Common myeloid progenitor, CD34-positive (primary cell): ENCODE measurements at regions of chr2 and their contacts with region 1.

Region 1: GRCh38 chr2:11583840-11584524 is 50.1 kb downstream of the GREB1 start:
- DNase-seq: peak; percentile 87 to 95 (median 94)
- H3K4me3 ChIP-seq: no peak overlapping the region
- H3K27ac ChIP-seq: no peak overlapping the region
- H3K4me1 ChIP-seq: no peaks in the 10 kb centered on the region
- H3K27me3 ChIP-seq: peaks cover 0 to 9% (median 3%) of the 10 kb centered on the region in 5 experiments

Region 2: DNA sequence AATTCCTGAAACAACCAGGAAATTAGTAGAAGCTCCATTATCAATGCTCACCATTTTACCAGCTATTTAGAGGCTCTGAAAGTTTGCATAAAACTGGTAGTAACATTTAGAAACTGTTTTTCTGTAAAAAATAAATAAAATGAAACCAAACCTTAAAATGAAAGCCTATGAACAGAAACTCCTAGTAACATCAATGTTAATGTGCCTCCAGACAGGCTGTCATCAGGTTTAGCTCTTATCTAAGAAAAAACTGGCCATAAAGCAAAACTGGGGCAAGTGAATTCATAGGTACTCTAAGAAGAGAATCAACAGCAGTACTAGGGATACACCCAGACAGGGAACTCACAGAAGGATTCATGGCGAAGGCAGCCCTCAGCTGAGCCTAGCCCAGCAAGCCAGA is 126.0 kb before region 1 on chr2:
- CTCF ChIA-PET with region 1: interaction called, 19 read pairs
- POLR2A ChIA-PET with region 1: no interaction called
- DNase-seq: no peak
- H3K4me3 ChIP-seq: no peak overlapping the region
- H3K27ac ChIP-seq: no peak overlapping the region
- H3K4me1 ChIP-seq: peaks cover 0 to 15% (median 5%) of the 10 kb centered on the region in 4 experiments
- H3K27me3 ChIP-seq: no peaks in the 10 kb centered on the region

Region 3: DNA sequence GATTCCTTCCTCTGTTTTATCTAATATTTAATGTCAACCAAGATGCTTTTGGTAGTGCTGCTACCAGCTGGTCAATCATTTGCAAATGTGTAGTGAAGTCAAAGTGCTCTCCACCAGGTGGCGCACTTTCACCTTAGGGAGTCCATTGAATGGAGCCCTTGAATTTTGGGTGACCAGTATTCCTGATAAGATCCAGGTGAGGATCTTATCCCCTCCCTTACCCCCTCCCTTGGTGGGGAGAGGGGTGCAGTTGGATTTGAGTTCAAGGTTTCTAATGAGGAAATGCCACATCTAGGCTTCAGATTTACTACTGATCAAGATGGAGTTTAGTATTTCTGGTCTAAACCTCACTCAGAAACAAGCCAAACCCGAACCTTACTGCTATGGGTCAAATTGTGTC is 106.0 kb before region 1 on chr2:
- CTCF ChIA-PET with region 1: interaction called, 125 read pairs
- POLR2A ChIA-PET with region 1: no interaction called
- DNase-seq: peak; percentile 79 to 88 (median 82)
- H3K4me3 ChIP-seq: no peak overlapping the region
- H3K27ac ChIP-seq: no peak overlapping the region
- H3K4me1 ChIP-seq: peaks cover 0 to 12% (median 11%) of the 10 kb centered on the region in 4 experiments
- H3K27me3 ChIP-seq: peaks cover 8 to 44% (median 16%) of the 10 kb centered on the region in 5 experiments

Region 4: DNA sequence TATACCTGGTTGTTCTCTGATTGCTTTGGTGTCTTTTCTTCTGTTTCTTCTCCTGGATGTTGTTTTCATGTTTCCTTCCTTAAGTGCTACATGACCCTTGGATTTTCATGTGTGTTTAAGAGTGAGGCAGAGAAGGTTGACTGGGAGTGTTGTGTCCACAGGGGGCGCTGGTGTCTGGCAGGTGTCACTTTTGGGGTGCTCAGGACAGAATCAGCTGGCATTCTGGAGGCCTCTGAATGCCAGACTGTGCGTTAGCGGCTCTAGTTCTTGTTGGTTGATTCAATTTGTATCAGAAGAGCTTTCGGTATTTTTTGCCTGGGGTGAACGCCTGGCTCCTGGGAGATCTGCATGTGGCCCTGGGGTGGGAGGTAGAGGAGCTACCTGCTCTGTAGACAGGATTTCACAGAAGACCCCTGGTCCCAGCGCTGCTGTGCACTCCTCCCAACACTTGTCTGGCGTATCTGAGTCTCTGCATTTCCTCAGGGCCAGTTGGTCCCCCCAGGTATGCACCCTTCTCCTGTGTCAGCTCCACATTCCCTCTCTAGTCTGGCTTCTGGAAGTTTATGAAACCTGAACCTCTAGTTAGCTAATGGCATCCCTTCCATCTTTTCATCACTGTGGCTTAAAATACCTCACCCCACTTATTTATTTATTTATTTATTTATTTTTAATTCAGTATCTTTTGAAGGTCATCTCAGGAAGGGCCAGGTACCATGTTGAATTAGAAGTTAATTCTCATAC is 49.1 kb before region 1 on chr2:
- CTCF ChIA-PET with region 1: interaction called, 10 read pairs
- POLR2A ChIA-PET with region 1: no interaction called
- DNase-seq: no peak
- H3K4me3 ChIP-seq: no peak overlapping the region
- H3K27ac ChIP-seq: no peak overlapping the region
- H3K4me1 ChIP-seq: no peaks in the 10 kb centered on the region
- H3K27me3 ChIP-seq: peaks cover 0 to 66% (median 10%) of the 10 kb centered on the region in 5 experiments

Region 5: DNA sequence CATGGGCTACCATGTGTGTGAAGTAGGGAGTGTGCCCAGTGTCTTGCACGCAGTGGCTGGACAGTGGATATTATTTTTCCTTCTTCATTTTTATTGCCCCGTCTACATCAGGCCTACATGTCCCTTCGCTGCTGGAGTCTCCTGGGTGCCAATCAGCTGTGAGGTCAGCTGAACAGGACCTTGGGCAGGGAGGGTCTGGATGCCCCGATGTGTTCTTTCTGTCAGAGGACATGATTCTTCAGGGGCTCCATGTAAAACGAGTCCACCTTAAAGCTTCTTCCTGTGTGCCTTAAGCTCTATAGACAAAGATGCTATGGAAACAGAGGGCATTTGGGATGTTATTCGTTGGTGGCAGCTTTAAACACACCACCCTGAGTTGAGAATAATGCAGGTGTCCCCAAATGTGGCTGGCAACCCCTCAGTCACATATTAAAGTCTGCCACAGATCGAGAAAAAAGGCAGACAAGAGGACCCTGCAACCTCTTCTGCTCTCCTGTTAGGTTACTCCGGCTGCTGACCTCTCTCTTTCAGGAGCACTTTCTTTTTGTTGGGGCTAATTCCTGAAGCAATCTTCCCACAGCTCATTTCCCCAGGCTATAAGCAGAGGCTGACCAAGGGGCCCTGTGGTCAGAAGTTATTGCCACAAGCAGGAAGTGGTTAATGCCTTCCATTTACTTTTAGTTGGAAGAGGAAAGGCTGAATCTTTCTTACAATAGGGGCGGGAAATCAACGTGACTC is 30.2 kb before region 1 on chr2:
- CTCF ChIA-PET with region 1: interaction called, 12 read pairs
- POLR2A ChIA-PET with region 1: no interaction called
- DNase-seq: no peak
- H3K4me3 ChIP-seq: peak overlapping the region in 3 of 7 experiments; percentile 23 to 43 (median 35)
- H3K27ac ChIP-seq: no peak overlapping the region
- H3K4me1 ChIP-seq: peaks cover 0 to 12% (median 10%) of the 10 kb centered on the region in 4 experiments
- H3K27me3 ChIP-seq: peaks cover 0 to 26% (median 14%) of the 10 kb centered on the region in 5 experiments

Region 6: DNA sequence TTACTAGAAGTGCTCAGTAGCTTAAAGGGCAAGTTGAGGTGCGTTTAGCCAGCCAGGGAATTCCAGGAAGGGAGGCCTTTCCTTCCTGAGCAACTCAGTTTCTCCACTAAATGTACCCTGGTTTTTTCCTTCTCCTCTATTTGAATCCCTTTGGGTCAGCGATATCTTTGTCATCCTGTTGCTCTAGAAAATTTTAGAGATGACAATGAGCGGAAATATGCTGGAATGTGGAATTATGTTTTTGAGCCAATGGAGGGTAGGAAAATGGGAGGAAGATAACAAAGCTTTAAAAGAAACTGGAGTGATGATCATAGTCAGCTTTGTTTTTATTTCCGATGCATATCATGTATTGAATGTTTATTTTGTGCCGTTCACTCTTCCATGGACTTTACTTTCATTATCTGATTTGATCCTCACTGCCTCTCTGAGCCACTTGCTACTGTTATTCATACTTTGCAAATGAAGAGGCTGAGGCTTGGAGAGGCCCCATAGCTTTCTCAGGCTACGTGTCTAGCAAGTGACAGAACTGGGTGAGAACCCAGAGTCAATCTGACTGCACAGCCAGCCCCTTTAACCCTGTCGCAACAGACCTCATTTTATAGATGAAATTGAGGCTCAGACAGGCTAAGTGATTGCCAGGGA is 18.7 kb after region 1 on chr2:
- CTCF ChIA-PET with region 1: interaction called, 10 read pairs
- POLR2A ChIA-PET with region 1: no interaction called
- DNase-seq: no peak
- H3K4me3 ChIP-seq: no peak overlapping the region
- H3K27ac ChIP-seq: no peak overlapping the region
- H3K4me1 ChIP-seq: no peaks in the 10 kb centered on the region
- H3K27me3 ChIP-seq: peaks cover 0 to 10% (median 7%) of the 10 kb centered on the region in 5 experiments

Region 7: GRCh38 chr2:11764359-11764758 is 180.4 kb after region 1 on chr2:
- CTCF ChIA-PET with region 1: no interaction called
- POLR2A ChIA-PET with region 1: no interaction called
- DNase-seq: no peak
- H3K4me3 ChIP-seq: no peak overlapping the region
- H3K27ac ChIP-seq: no peak overlapping the region
- H3K4me1 ChIP-seq: peaks cover 8 to 65% (median 38%) of the 10 kb centered on the region in 4 experiments
- H3K27me3 ChIP-seq: no peaks in the 10 kb centered on the region